Activated CD8-positive, alpha-beta memory T cell treated with anti-CD3 and anti-CD28 coated beads, Interleukin-2, amount 10 ng/mL, durations not matched to agents 7 days and 5 days (primary cell): ENCODE measurements at regions of chr10 and their contacts with region 1.

Region 1: DNA sequence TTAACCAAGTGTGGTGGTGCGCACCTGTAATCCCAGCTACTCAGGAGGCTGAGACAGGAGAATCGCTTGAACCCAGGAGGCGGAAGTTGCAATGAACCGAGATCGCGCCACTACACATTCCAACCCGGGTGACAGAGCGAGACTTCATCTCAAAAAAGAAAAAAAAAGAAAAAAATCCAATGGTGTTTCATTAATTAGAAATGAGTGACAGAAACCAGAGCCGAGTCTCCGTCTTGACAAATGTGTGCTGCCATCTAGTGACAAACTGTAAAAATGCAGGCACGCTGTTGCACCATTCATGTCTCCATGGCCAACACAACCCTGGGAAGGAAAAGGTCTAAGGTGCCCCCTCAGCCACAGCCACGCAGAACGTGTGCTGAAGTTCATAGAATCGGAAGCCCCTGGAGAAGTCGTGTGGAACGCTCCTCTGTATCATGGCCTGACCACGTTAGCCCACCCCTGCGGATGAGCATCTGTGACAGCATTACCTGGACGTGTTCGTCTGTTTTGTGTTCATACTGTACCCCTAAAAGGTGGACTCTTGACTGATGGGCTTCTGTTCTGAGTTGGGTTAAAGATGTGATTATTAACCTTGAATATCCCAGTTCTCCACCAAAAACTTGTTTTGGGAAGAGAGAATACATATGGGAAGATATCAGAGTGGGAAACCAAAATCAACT is 94.9 kb downstream of the LYZL2 start:
- DNase-seq: peak; percentile 86
- ATAC-seq: peak; percentile 47
- H3K4me3 Mint-ChIP-seq: no peak overlapping the region
- H3K27ac Mint-ChIP-seq: no peak overlapping the region
- H3K4me1 Mint-ChIP-seq: peaks cover 52% of the 10 kb centered on the region
- H3K27me3 Mint-ChIP-seq: no peaks in the 10 kb centered on the region

Region 2: DNA sequence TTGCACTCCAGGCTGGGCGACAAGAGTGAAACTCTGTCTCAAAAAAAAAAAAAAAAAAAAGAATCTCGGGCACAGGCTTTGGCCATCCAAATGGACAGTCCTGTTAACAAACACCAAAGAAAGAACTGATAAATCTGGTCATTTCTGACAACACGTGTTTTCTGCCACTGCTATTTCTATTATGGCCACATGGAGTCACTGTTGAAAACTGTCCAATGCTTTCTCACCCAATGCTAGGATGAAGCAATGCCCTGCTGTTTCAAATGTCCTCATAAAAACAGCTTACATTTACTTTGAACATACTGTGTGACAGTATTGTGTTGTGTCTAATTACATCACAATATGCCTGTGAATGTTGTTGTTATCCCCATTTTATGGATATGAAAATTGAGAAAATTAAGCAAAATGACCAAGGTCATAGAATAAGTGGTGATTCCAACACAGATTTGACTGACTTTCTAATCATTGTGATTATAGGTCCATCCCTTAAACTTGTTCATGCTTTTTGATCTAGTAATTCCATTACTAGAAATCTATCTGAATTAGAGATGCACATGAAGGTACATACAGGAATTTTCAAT is 120.5 kb before region 1 on chr10:
- CTCF ChIA-PET with region 1: interaction called, 20 read pairs
- DNase-seq: peak; percentile 54
- ATAC-seq: peak; percentile 58
- H3K4me3 Mint-ChIP-seq: no peak overlapping the region
- H3K27ac Mint-ChIP-seq: peak overlapping the region; percentile 36
- H3K4me1 Mint-ChIP-seq: peaks cover 46% of the 10 kb centered on the region
- H3K27me3 Mint-ChIP-seq: no peaks in the 10 kb centered on the region

Region 3: DNA sequence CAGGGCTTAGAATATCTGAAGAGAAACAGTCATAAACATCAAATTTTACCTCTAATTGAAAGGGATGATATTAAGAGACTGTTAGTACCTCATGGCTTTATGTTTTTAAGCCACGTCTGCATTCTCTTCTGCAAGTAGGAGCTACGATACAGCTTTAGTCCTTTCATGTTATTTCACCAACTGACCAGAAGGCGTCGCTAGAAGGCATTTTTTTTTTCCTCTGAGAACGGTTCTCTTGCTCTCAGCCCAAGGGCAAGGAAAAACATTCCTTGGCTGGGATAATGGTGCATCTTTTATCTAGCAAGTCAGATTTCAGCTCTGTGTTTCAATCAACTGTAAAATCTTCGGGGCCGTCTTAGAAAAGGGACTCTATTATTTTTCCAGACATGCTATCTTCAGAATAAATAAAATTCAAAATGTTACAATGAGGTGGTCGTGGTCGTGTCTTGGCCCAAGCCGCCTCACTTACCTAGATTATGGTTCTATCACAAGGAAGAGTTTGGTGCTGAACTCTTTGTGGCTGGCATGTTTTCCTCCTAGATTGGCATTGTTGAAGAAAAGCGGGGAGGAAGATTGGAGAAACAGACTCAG is 136.5 kb after region 1 on chr10:
- CTCF ChIA-PET with region 1: no interaction called
- DNase-seq: no peak
- ATAC-seq: peak; percentile 76
- H3K4me3 Mint-ChIP-seq: peak overlapping the region; percentile 58
- H3K27ac Mint-ChIP-seq: no peak overlapping the region
- H3K4me1 Mint-ChIP-seq: peaks cover 26% of the 10 kb centered on the region
- H3K27me3 Mint-ChIP-seq: peaks cover 9% of the 10 kb centered on the region